HCT116 (cell line): ENCODE measurements at regions of chrX and their contacts with region 1.

Region 1: GRCh38 chrX:119181491-119181890 is 53.9 kb upstream of the KIAA1210 start:
- DNase-seq: peak; percentile 18
- ATAC-seq: peak; percentile 92
- H3K4me3 ChIP-seq: no peak overlapping the region
- H3K27ac ChIP-seq: no peak overlapping the region
- H3K4me1 ChIP-seq: no peaks in the 10 kb centered on the region
- H3K27me3 ChIP-seq: no peaks in the 10 kb centered on the region
- CTCF ChIP-seq: peak; percentile 35 to 53 (median 47); a peak in 5 of 6 replicates
- POLR2A ChIP-seq: no peak
- RAD21 ChIP-seq: peak; percentile 54

Region 2: DNA sequence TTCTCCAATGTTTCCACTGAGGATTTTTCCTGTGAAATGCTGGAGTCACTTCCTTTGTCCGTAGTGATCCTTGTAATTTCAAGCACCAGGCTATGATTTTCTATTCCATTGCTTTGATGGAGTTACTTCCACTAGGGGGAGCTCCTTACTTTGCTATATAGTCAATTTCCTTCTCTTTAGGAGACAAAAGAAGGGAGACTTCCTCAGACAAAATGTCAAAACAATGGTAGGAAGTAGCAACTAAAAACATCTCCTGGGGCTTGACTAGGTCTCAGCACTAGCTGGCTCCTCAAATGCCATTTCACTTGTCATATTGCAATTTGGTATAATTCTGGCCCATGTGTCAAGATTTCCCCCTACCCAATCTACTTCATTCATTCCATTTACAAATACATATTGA is 333.8 kb before region 1 on chrX:
- CTCF ChIA-PET with region 1: no interaction called
- POLR2A ChIA-PET with region 1: no interaction called
- RAD21 ChIA-PET with region 1: no interaction called
- intact Hi-C with region 1: loop called (anchors 1 kb)
- DNase-seq: peak; percentile 38
- ATAC-seq: peak; percentile 65; the same call in 1 of the 2 replicates
- H3K4me3 ChIP-seq: no peak overlapping the region
- H3K27ac ChIP-seq: no peak overlapping the region
- H3K4me1 ChIP-seq: no peaks in the 10 kb centered on the region
- H3K27me3 ChIP-seq: no peaks in the 10 kb centered on the region
- CTCF ChIP-seq: peak; percentile 44 to 64 (median 58); a peak in 5 of 6 replicates
- POLR2A ChIP-seq: no peak
- RAD21 ChIP-seq: peak; percentile 77

Region 3: GRCh38 chrX:119118780-119119395 is 62.6 kb before region 1 on chrX:
- CTCF ChIA-PET with region 1: interaction called, 3 read pairs
- POLR2A ChIA-PET with region 1: no interaction called
- RAD21 ChIA-PET with region 1: no interaction called
- intact Hi-C with region 1: loop called (anchors 1 kb)
- DNase-seq: peak; percentile 27
- ATAC-seq: peak; percentile 99
- H3K4me3 ChIP-seq: no peak overlapping the region
- H3K27ac ChIP-seq: no peak overlapping the region
- H3K4me1 ChIP-seq: no peaks in the 10 kb centered on the region
- H3K27me3 ChIP-seq: no peaks in the 10 kb centered on the region
- CTCF ChIP-seq: peak; percentile 38 to 76 (median 66); a peak in 5 of 6 replicates
- POLR2A ChIP-seq: no peak
- RAD21 ChIP-seq: peak; percentile 65

Region 4: DNA sequence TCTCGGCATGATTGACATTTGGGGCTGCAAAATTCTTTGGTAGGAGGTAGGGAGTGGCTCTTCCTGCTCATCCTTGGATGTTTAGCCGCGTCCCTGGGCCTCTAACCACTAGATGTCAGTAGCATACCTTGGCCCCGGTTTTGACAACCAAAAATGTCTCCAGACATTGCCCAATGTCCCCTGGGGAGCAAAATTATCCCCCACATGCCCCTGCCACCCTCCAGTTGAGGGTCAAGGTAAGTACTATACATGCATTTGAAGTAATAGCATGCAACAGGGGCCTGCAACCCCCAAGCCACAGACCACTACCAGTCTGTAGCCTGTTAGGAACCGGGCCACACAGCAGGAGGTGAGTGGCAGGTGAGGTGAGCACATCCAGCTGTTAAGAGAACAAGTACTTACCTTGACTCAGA is 36.2 kb before region 1 on chrX:
- CTCF ChIA-PET with region 1: interaction called, 5 read pairs
- POLR2A ChIA-PET with region 1: no interaction called
- RAD21 ChIA-PET with region 1: no interaction called
- intact Hi-C with region 1: loop called (anchors 1 kb)
- DNase-seq: peak; percentile 12
- ATAC-seq: peak; percentile 82
- H3K4me3 ChIP-seq: no peak overlapping the region
- H3K27ac ChIP-seq: no peak overlapping the region
- H3K4me1 ChIP-seq: no peaks in the 10 kb centered on the region
- H3K27me3 ChIP-seq: no peaks in the 10 kb centered on the region
- CTCF ChIP-seq: peak; percentile 53 to 61 (median 57)
- POLR2A ChIP-seq: no peak
- RAD21 ChIP-seq: peak; percentile 69